PC-9 (cell line): ENCODE measurements at regions of chr14 and their contacts with region 1.

Region 1: GRCh38 chr14:77059276-77059915 is 30.9 kb upstream of the IRF2BPL start:
- DNase-seq: peak; percentile 89 to 90
- H3K4me3 ChIP-seq: no peak overlapping the region
- H3K27ac ChIP-seq: 0 out of 2 replicates have a peak overlapping the region, but pooled peaks have one; percentile 2
- H3K4me1 ChIP-seq: peaks cover 28% of the 10 kb centered on the region
- H3K27me3 ChIP-seq: no peaks in the 10 kb centered on the region
- CTCF ChIP-seq: peak; percentile 47; the same call in 1 of the 2 replicates

Region 2: DNA sequence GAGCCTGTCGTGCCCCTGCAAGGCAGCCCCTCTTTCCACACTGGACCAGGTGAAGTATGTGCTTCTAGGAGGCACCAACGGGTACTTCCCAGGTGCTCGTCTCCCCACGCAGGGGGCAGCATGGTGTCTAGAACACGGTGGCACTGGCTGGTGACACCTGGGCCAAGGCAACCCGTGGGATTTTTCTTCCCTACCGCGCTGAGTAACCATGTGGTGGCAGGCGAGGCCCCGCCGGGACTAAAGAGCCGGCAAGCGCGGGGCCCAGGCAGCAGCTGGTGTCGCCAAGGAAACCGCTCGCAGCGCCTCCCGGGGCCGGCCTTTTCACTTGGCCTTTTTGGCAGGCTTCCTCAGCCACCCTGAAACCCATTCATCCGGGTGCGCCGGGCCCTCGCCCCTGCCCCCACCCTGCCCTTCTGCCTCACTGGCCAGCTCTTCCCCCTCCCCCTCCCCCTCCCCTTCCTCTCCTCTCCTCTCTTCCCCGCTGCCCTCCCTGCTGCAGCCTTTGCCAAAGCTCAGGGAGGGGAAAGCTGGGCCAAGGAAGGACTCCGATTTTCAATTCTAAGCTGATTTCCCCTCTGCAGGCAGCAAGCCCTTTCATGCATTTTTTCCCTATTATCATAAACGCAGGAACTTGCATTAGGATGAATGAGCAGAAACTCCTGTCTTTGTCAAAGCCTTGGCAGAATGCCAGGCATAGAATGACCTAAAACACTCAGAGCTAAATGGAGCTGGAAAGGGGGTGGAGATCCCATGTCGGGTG is 112.1 kb before region 1 on chr14:
- CTCF ChIA-PET with region 1: interaction called, 10 read pairs
- POLR2A ChIA-PET with region 1: no interaction called
- intact Hi-C with region 1: no loop called
- DNase-seq: peak; percentile 95 to 100
- H3K4me3 ChIP-seq: peak overlapping the region; percentile 15; the same call in 1 of the 2 replicates
- H3K27ac ChIP-seq: peak overlapping the region; percentile 93
- H3K4me1 ChIP-seq: peaks cover 81% of the 10 kb centered on the region
- H3K27me3 ChIP-seq: no peaks in the 10 kb centered on the region
- CTCF ChIP-seq: peak; percentile 59; the same call in 1 of the 2 replicates

Region 3: GRCh38 chr14:77023001-77023996 is 36.1 kb before region 1 on chr14:
- CTCF ChIA-PET with region 1: interaction called, 16 read pairs
- POLR2A ChIA-PET with region 1: interaction called, 16 read pairs
- intact Hi-C with region 1: loop called (anchors 2 kb)
- DNase-seq: peak in 1 of 2 experiments; percentile 61
- H3K4me3 ChIP-seq: peak overlapping the region; percentile 64
- H3K27ac ChIP-seq: peak overlapping the region; percentile 17
- H3K4me1 ChIP-seq: peaks cover 40% of the 10 kb centered on the region
- H3K27me3 ChIP-seq: no peaks in the 10 kb centered on the region
- CTCF ChIP-seq: no peak

Region 4: GRCh38 chr14:77040059-77040740 is 19.2 kb before region 1 on chr14:
- CTCF ChIA-PET with region 1: interaction called, 4 read pairs
- POLR2A ChIA-PET with region 1: interaction called, 9 read pairs
- intact Hi-C with region 1: loop called (anchors 1 kb)
- DNase-seq: peak; percentile 99
- H3K4me3 ChIP-seq: peak overlapping the region; percentile 41
- H3K27ac ChIP-seq: peak overlapping the region; percentile 85
- H3K4me1 ChIP-seq: peaks cover 95% of the 10 kb centered on the region
- H3K27me3 ChIP-seq: no peaks in the 10 kb centered on the region
- CTCF ChIP-seq: no peak

Region 5: GRCh38 chr14:77076113-77076631 is 16.8 kb after region 1 on chr14:
- CTCF ChIA-PET with region 1: interaction called, 8 read pairs
- POLR2A ChIA-PET with region 1: interaction called, 15 read pairs
- intact Hi-C with region 1: no loop called
- DNase-seq: no peak
- H3K4me3 ChIP-seq: no peak overlapping the region
- H3K27ac ChIP-seq: no peak overlapping the region
- H3K4me1 ChIP-seq: peaks cover 35% of the 10 kb centered on the region
- H3K27me3 ChIP-seq: no peaks in the 10 kb centered on the region
- CTCF ChIP-seq: no peak

Region 6: GRCh38 chr14:77133720-77134338 is 74.4 kb after region 1 on chr14:
- CTCF ChIA-PET with region 1: no interaction called
- POLR2A ChIA-PET with region 1: no interaction called
- intact Hi-C with region 1: no loop called
- DNase-seq: peak; percentile 53 to 75
- H3K4me3 ChIP-seq: no peak overlapping the region
- H3K27ac ChIP-seq: no peak overlapping the region
- H3K4me1 ChIP-seq: no peaks in the 10 kb centered on the region
- H3K27me3 ChIP-seq: peaks cover 94% of the 10 kb centered on the region
- CTCF ChIP-seq: no peak

Region 7: GRCh38 chr14:77542421-77543239 is 483.2 kb after region 1 on chr14:
- CTCF ChIA-PET with region 1: no interaction called
- POLR2A ChIA-PET with region 1: no interaction called
- intact Hi-C with region 1: no loop called
- DNase-seq: no peak
- H3K4me3 ChIP-seq: no peak overlapping the region
- H3K27ac ChIP-seq: no peak overlapping the region
- H3K4me1 ChIP-seq: no peaks in the 10 kb centered on the region
- H3K27me3 ChIP-seq: no peaks in the 10 kb centered on the region
- CTCF ChIP-seq: no peak